ENCODE measurements at regions of chr15 and their contacts with region 1.

Region 1: GRCh38 chr15:64809649-64810496 is 15.6 kb downstream of the PIF1 start:
- DNase-seq: peak; percentile 82
- ATAC-seq: peak; percentile 87
- H3K4me3 Mint-ChIP-seq: no peak overlapping the region
- H3K27ac Mint-ChIP-seq: no peak overlapping the region
- H3K4me1 Mint-ChIP-seq: no peaks in the 10 kb centered on the region
- H3K27me3 Mint-ChIP-seq: peaks cover 6% of the 10 kb centered on the region

Region 2: GRCh38 chr15:64783796-64784195 is 26.1 kb before region 1 on chr15:
- CTCF ChIA-PET with region 1: interaction called, 19 read pairs
- POLR2A ChIA-PET with region 1: no interaction called
- DNase-seq: no peak
- ATAC-seq: no peak
- H3K4me3 Mint-ChIP-seq: no peak overlapping the region
- H3K27ac Mint-ChIP-seq: no peak overlapping the region
- H3K4me1 Mint-ChIP-seq: peaks cover 10% of the 10 kb centered on the region
- H3K27me3 Mint-ChIP-seq: peaks cover 15% of the 10 kb centered on the region

Region 3: GRCh38 chr15:64825431-64826294 is 15.8 kb after region 1 on chr15 and contains the start of gene PIF1:
- CTCF ChIA-PET with region 1: interaction called, 55 read pairs
- POLR2A ChIA-PET with region 1: interaction called, 4 read pairs
- DNase-seq: peak; percentile 98
- ATAC-seq: peak; percentile 94
- H3K4me3 Mint-ChIP-seq: peak within 1 kb of the TSS; percentile 88
- H3K27ac Mint-ChIP-seq: peak within 1 kb of the TSS; percentile 92
- H3K4me1 Mint-ChIP-seq: peaks cover 40% of the 10 kb centered on the region
- H3K27me3 Mint-ChIP-seq: no peaks in the 10 kb centered on the region
- total RNA-seq, gene PIF1: 69.1 to 71.1 TPM

Region 4: GRCh38 chr15:64836023-64836536 is 26.2 kb after region 1 on chr15:
- CTCF ChIA-PET with region 1: interaction called, 22 read pairs
- POLR2A ChIA-PET with region 1: no interaction called
- DNase-seq: no peak
- ATAC-seq: peak; percentile 12
- H3K4me3 Mint-ChIP-seq: peak overlapping the region; percentile 22
- H3K27ac Mint-ChIP-seq: peak overlapping the region; percentile 96
- H3K4me1 Mint-ChIP-seq: peaks cover 53% of the 10 kb centered on the region
- H3K27me3 Mint-ChIP-seq: no peaks in the 10 kb centered on the region